MCF 10A (cell line): ENCODE measurements at regions of chr3 and their contacts with region 1.

Region 1: DNA sequence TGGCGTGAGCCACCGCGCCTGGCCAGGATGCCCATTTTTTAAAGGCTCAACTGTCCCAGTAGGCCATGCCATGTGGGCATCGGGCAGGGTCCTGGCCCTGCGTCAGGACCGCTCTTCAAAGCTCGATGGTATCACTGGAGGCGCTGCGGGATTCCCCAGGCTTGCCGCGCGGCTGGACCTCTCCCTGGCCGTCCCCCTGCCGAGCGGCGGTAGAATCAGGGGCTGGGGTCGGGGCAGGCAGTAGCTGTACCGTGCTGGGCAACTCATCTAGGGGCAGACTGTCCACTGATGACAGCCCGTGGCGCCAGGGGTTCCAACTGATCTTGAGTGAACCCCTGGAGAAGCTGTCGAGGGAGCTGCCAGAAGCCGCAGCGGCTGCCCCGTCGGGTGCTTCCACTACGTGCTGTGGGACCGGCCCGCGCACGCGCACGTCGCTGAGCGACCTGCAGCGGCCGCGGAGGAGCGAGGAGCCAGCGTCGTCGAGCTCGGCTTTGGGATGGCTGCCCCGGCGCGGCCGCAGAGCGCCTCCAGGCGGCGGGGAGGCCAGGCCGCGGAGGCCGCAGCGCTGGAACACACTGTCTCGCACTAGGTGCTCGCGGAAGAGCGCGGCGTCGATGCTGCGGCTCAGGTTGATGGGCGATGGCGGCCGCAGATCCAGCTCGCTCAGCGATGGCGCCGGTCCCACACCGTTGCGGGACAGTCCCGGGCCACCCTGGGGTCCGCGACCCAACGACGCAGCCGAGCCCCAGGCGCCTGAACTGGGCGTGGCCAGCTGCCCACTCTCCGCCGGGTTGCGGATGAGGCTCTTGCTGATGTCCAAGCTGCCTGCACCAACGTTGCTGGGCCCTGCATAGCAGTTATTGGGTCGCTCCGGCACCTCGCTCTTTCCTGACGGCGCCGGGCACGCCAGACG is 5.8 kb downstream of the PRRT3 start:
- DNase-seq: peak; percentile 90
- H3K4me3 Mint-ChIP-seq: peak overlapping the region; percentile 88
- H3K27ac Mint-ChIP-seq: peak overlapping the region; percentile 82
- H3K4me1 Mint-ChIP-seq: no peaks in the 10 kb centered on the region
- H3K27me3 Mint-ChIP-seq: no peaks in the 10 kb centered on the region
- CTCF ChIP-seq: peak; percentile 82

Region 2: GRCh38 chr3:9715764-9716437 is 230.5 kb before region 1 on chr3:
- CTCF ChIA-PET with region 1: interaction called, 8 read pairs
- POLR2A ChIA-PET with region 1: no interaction called
- intact Hi-C with region 1: loop called (anchors 2 kb)
- DNase-seq: peak; percentile 93
- H3K4me3 Mint-ChIP-seq: no peak overlapping the region
- H3K27ac Mint-ChIP-seq: no peak overlapping the region
- H3K4me1 Mint-ChIP-seq: peaks cover 7% of the 10 kb centered on the region
- H3K27me3 Mint-ChIP-seq: peaks cover 51% of the 10 kb centered on the region
- CTCF ChIP-seq: peak; percentile 89

Region 3: DNA sequence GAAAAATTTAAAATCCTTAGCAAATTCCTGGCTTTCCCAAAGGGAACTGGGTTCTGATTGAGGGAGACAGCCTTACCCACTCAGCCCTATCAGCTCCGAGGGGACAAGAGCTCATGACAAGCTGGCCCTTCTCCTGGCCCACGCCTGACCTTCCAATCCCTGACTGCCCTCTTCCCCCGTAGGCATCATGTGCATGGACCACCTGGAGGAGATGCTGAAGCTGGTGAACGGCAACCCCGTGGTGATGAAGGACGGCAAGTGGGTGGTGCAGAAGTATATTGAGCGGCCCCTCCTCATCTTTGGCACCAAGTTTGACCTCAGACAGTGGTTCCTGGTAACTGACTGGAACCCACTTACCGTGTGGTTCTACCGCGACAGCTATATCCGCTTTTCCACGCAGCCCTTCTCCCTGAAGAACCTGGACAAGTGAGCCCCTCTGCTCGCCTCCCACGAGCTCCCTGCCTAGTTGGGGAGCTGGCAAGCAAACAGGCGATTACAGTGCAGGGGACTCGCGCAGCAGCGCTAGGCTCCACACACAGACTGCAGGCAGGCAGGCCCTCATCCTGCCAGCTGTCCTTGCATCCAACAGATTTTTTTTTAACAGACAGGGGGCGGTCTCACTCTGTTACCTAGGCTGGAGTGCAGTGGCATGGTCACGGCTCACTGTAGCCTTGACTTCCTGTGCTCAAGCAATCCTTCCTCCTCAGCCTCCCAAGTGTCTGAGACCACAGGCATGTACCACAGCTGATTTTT is 119.4 kb before region 1 on chr3:
- CTCF ChIA-PET with region 1: interaction called, 17 read pairs
- POLR2A ChIA-PET with region 1: no interaction called
- intact Hi-C with region 1: loop called (anchors 1 kb)
- DNase-seq: peak; percentile 41
- H3K4me3 Mint-ChIP-seq: no peak overlapping the region
- H3K27ac Mint-ChIP-seq: no peak overlapping the region
- H3K4me1 Mint-ChIP-seq: no peaks in the 10 kb centered on the region
- H3K27me3 Mint-ChIP-seq: no peaks in the 10 kb centered on the region
- CTCF ChIP-seq: peak; percentile 34

Region 4: GRCh38 chr3:9884555-9885165 is 61.7 kb before region 1 on chr3:
- CTCF ChIA-PET with region 1: interaction called, 7 read pairs
- POLR2A ChIA-PET with region 1: interaction called, 17 read pairs
- intact Hi-C with region 1: no loop called
- DNase-seq: peak; percentile 90
- H3K4me3 Mint-ChIP-seq: peak overlapping the region; percentile 53
- H3K27ac Mint-ChIP-seq: peak overlapping the region; percentile 98
- H3K4me1 Mint-ChIP-seq: peaks cover 24% of the 10 kb centered on the region
- H3K27me3 Mint-ChIP-seq: no peaks in the 10 kb centered on the region
- CTCF ChIP-seq: no peak

Region 5: DNA sequence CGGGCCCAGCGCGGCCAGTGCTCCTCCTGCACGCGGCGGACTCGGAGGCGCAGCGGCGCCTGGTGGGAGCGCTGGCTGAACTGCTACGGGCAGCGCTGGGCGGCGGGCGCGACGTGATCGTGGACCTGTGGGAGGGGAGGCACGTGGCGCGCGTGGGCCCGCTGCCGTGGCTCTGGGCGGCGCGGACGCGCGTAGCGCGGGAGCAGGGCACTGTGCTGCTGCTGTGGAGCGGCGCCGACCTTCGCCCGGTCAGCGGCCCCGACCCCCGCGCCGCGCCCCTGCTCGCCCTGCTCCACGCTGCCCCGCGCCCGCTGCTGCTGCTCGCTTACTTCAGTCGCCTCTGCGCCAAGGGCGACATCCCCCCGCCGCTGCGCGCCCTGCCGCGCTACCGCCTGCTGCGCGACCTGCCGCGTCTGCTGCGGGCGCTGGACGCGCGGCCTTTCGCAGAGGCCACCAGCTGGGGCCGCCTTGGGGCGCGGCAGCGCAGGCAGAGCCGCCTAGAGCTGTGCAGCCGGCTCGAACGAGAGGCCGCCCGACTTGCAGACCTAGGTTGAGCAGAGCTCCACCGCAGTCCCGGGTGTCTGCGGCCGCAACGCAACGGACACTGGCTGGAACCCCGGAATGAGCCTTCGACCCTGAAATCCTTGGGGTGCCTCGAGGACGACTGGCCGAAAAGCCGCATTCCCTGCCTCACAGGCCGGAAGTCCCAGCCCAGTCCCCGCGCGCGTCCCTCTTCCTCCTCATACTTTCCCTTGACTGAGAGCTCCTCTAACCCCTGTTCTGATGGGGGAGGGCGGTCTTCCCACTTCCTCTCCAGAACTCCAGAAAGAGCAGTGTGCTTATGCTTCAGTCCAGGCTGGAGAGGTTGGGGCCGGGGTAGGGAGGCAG is 30.9 kb before region 1 on chr3:
- CTCF ChIA-PET with region 1: interaction called, 21 read pairs
- POLR2A ChIA-PET with region 1: interaction called, 15 read pairs
- intact Hi-C with region 1: no loop called
- DNase-seq: no peak
- H3K4me3 Mint-ChIP-seq: no peak overlapping the region
- H3K27ac Mint-ChIP-seq: no peak overlapping the region
- H3K4me1 Mint-ChIP-seq: peaks cover 21% of the 10 kb centered on the region
- H3K27me3 Mint-ChIP-seq: no peaks in the 10 kb centered on the region
- CTCF ChIP-seq: no peak

Region 6: DNA sequence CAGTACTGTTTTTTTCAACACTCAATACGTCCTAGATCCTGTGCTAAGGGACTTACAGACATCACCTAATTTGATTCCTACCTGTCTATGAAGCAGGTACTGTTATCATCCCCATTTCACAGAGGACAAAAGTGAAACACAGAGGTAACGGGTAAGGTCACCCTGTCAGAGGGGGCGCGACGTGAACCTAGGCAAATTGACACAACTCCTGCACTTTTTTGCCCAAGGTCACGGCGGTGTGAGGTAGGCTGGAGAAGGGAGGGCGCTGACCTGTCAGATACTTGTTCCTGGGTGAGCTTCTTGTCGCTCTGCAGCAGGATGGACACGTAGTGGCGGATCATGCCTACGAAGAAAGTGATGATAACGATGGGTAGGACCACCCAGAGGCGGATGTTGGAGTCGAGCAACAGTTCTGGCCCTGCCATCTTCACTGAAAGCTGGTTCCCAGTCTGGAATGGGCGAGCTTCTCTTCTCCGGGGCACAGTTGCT is 39.9 kb after region 1 on chr3:
- CTCF ChIA-PET with region 1: interaction called, 11 read pairs
- POLR2A ChIA-PET with region 1: interaction called, 5 read pairs
- intact Hi-C with region 1: no loop called
- DNase-seq: no peak
- H3K4me3 Mint-ChIP-seq: peak overlapping the region; percentile 94
- H3K27ac Mint-ChIP-seq: peak overlapping the region; percentile 96
- H3K4me1 Mint-ChIP-seq: peaks cover 15% of the 10 kb centered on the region
- H3K27me3 Mint-ChIP-seq: no peaks in the 10 kb centered on the region
- CTCF ChIP-seq: no peak

Region 7: DNA sequence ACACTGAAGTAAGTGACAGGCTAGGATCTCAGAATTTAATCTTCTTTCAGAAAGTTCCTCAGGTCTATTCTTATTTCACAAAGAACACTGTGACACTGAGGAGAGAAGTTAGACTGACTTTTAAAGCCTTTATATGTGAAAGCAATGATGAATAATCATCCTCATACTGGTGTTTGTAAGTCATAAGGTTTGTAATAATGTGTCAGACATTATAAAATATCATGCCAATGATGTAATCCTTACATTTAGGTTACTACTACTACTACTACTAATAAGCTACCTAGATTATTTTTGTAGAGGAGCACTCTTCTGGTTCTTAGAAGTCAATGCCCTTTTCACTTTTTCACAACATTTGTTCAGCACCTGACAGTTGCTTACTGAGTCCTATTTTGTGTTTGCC is 128.3 kb after region 1 on chr3:
- CTCF ChIA-PET with region 1: no interaction called
- POLR2A ChIA-PET with region 1: no interaction called
- intact Hi-C with region 1: no loop called
- DNase-seq: no peak
- H3K4me3 Mint-ChIP-seq: no peak overlapping the region
- H3K27ac Mint-ChIP-seq: no peak overlapping the region
- H3K4me1 Mint-ChIP-seq: no peaks in the 10 kb centered on the region
- H3K27me3 Mint-ChIP-seq: no peaks in the 10 kb centered on the region
- CTCF ChIP-seq: no peak

Region 8: GRCh38 chr3:10273702-10274305 is 327.4 kb after region 1 on chr3:
- CTCF ChIA-PET with region 1: no interaction called
- POLR2A ChIA-PET with region 1: no interaction called
- intact Hi-C with region 1: no loop called
- DNase-seq: no peak
- H3K4me3 Mint-ChIP-seq: no peak overlapping the region
- H3K27ac Mint-ChIP-seq: no peak overlapping the region
- H3K4me1 Mint-ChIP-seq: peaks cover 16% of the 10 kb centered on the region
- H3K27me3 Mint-ChIP-seq: no peaks in the 10 kb centered on the region
- CTCF ChIP-seq: no peak

Region 9: DNA sequence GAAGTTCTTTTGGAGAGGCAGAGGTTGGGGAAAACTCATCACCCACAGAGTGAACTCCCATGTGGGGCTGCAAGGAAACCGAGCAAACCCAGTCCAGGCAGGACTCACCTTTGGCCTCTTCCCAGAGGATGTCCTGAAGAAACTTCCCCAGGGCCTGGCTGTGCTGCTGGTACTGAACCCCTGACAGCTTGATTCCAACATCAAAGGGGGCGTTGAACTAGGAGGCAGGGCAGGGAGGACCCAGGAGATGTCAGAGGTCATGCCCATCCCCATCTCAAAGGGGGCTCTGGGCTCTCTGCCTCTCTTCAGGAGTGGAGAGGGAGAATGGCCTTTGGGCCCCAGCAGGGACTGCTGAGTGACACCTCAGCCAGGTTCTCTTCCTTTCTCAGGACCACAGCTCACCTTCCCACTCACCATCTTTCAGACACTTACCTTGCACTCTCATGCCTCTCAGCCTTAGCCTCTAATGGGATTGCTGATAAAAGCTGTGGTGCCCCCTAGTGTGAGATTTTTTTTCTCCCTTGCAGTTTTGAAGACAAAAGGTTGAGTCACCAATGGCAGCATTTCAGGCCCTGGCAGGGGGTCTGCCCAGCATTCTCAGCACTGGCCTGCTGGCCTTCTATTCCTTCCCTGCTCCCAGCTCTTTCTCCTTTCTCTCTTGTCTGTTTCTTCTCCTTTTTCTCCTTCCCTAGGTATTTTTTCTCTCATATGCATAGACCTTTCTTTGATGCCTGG is 340.4 kb after region 1 on chr3:
- CTCF ChIA-PET with region 1: no interaction called
- POLR2A ChIA-PET with region 1: no interaction called
- intact Hi-C with region 1: loop called (anchors 2 kb)
- DNase-seq: peak; percentile 83
- H3K4me3 Mint-ChIP-seq: no peak overlapping the region
- H3K27ac Mint-ChIP-seq: no peak overlapping the region
- H3K4me1 Mint-ChIP-seq: no peaks in the 10 kb centered on the region
- H3K27me3 Mint-ChIP-seq: no peaks in the 10 kb centered on the region
- CTCF ChIP-seq: peak; percentile 53